ENCODE measurements at regions of chr16 and their contacts with region 1.

Region 1: DNA sequence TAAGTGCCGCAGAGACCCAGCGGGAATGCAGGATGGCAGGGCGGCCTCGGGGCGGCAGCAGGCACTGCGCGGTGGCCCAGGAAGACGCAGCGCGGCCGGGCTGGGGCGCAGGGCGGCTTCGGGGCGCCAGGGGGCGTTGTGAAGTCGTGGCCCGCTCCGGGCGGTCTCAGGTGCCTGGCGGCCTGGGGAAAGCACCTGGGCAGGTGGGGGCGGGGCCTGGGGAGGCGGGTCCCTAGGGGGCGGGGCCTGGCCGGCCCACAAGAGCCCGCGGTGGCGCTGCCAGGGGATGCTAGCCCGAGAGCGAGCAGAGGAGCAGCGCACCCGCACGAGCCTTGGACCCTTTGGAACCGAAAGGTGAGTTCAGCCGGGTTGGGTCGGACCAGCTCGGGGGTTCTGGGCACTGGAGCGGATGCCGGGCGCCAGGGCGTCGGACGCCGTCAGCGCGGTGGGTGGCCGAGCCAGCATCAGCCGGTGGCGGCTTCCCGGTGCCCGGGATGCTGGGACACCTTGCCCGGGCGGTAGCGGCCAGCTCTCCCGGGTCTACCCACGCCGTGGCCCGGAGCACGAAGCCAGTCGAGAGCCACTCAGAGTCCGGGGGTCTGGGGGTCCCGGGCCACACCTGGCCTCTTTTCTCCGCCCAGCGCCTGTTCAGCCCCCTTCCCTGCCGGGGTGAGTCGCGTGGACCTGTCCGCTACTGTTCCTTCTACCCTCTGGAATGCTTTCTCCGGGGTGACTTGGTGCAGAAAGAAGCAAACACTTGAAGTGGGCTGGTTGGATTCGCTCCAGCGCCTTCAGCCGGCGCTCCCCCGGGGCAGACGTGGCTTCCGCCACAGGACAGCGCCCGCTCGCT is at the start of gene SCNN1G:
- DNase-seq: no peak
- H3K4me3 ChIP-seq: peak within 1 kb of the TSS; percentile 51 to 58
- H3K27ac ChIP-seq: peak within 1 kb of the TSS; percentile 45
- H3K4me1 ChIP-seq: peaks cover 24% of the 10 kb centered on the region
- H3K27me3 ChIP-seq: peaks cover 8% of the 10 kb centered on the region
- CTCF ChIP-seq: peak; percentile 49 to 98 (median 79)
- POLR2A ChIP-seq: no peak
- total RNA-seq, gene SCNN1G: 26.5 TPM

Region 2: DNA sequence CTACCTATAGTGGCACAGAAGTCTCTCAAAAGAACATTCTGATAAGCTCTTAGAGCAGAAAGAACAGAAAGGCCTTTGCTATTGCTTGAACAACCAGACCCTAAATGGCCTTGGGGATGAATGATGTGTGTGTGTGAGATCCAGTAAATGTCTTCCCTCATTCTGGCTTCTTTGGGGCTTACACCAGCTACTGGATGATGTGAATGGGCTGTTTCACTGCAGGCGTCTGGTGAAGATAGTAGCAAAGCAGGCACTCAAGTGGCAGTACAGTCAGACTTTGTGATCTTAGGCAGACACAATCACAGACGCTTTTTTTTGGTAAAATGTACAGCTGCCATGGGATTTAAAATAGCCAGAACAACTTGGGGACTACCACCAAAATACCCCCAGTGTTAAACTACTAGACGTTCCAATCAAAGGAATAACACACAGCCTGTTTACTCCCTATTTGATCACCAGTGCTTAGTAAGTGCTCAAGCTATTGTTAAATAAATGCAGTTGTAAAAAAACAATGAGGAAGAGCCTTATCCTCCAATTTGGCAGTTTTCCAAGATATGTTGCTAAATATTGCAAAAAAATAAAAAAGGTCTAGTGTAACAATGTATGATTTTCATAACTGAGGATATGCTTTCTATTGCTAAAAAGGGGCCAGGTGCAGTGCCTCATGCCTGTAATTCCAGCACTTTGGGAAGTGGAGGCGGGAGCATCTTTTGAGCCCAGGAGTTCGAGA is 395.6 kb after region 1 on chr16:
- intact Hi-C with region 1: no loop called
- DNase-seq: no peak
- H3K4me3 ChIP-seq: no peak overlapping the region
- H3K27ac ChIP-seq: no peak overlapping the region
- H3K4me1 ChIP-seq: no peaks in the 10 kb centered on the region
- H3K27me3 ChIP-seq: no peaks in the 10 kb centered on the region
- CTCF ChIP-seq: no peak
- POLR2A ChIP-seq: no peak

Region 3: DNA sequence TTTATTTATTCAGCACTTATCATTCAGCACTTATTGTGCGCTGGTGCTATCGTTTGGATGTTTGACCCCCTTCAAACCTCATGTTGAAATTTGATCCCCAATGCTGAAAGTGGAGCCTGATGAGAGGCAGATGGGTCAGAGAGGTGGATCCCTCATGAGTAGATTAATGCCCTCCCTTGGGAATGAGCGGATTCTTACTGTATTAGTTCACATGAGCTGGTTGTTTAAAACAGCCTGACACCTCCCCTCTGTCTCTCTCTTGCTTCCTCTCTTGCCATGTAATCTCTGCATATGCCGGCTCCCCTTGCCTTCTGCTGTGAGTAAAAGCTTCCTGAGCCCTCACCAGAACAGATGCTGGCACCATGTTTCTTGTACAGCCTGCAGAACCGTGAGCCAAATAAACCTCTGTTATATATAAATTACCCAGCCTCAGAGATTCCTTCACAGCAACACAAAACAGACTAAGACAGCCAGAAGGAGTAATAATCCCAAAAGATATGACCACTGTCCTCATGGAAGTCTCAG is 1184.6 kb after region 1 on chr16:
- intact Hi-C with region 1: loop called (anchors 5 kb)
- DNase-seq: no peak
- H3K4me3 ChIP-seq: no peak overlapping the region
- H3K27ac ChIP-seq: no peak overlapping the region
- H3K4me1 ChIP-seq: no peaks in the 10 kb centered on the region
- H3K27me3 ChIP-seq: no peaks in the 10 kb centered on the region
- CTCF ChIP-seq: no peak
- POLR2A ChIP-seq: no peak